ENCODE measurements at regions of chr15 and their contacts with region 1.

Region 1: GRCh38 chr15:64046347-64047153 is at the start of gene DAPK2:
- DNase-seq: peak; percentile 68 to 83
- ATAC-seq: peak; percentile 88 to 95 (median 90)
- H3K4me3 ChIP-seq: peak within 1 kb of the TSS; percentile 61 to 91 (median 72)
- H3K27ac ChIP-seq: peak within 1 kb of the TSS; percentile 48 to 86 (median 82)
- H3K4me1 ChIP-seq: peaks cover 2 to 69% (median 40%) of the 10 kb centered on the region in 9 donors
- H3K27me3 ChIP-seq: peaks cover 0 to 8% (median 0%) of the 10 kb centered on the region in 7 donors
- CTCF ChIP-seq: peak; percentile 73 to 94 (median 88)
- total RNA-seq, gene DAPK2: 20.8 to 62.6 (median 38.5) TPM

Region 2: GRCh38 chr15:63752075-63752684 is 294.4 kb before region 1 on chr15:
- intact Hi-C with region 1: loop called in 5 of 10 experiments (anchors 2 to 5 kb)
- DNase-seq: peak in 1 of 2 donors; percentile 60
- ATAC-seq: peak; percentile 52 to 86 (median 81)
- H3K4me3 ChIP-seq: no peak overlapping the region
- H3K27ac ChIP-seq: no peak overlapping the region
- H3K4me1 ChIP-seq: peaks cover 0 to 9% (median 0%) of the 10 kb centered on the region in 9 donors
- H3K27me3 ChIP-seq: no peaks in the 10 kb centered on the region
- CTCF ChIP-seq: peak; percentile 51 to 85 (median 73)

Region 3: GRCh38 chr15:63833021-63833696 is 213.4 kb before region 1 on chr15:
- intact Hi-C with region 1: loop called in 3 of 10 experiments (anchors 5 to 10 kb)
- DNase-seq: peak; percentile 25 to 41
- ATAC-seq: peak; percentile 33 to 82 (median 58)
- H3K4me3 ChIP-seq: peak overlapping the region; percentile 74 to 97 (median 94)
- H3K27ac ChIP-seq: peak overlapping the region; percentile 84 to 99 (median 97)
- H3K4me1 ChIP-seq: peaks cover 5 to 55% (median 30%) of the 10 kb centered on the region in 9 donors
- H3K27me3 ChIP-seq: no peaks in the 10 kb centered on the region
- CTCF ChIP-seq: no peak

Region 4: GRCh38 chr15:63896336-63897115 is 150.0 kb before region 1 on chr15:
- intact Hi-C with region 1: loop called in 4 of 10 experiments (anchors 5 to 10 kb)
- DNase-seq: no peak
- ATAC-seq: peak in 7 of 8 donors; percentile 41 to 67 (median 57)
- H3K4me3 ChIP-seq: no peak overlapping the region
- H3K27ac ChIP-seq: peak overlapping the region in 4 of 10 donors; percentile 3 to 70 (median 8)
- H3K4me1 ChIP-seq: peaks cover 4 to 85% (median 11%) of the 10 kb centered on the region in 9 donors
- H3K27me3 ChIP-seq: no peaks in the 10 kb centered on the region
- CTCF ChIP-seq: no peak

Region 5: GRCh38 chr15:63909819-63910437 is 136.6 kb before region 1 on chr15:
- intact Hi-C with region 1: loop called in 5 of 10 experiments (anchors 5 to 10 kb)
- DNase-seq: no peak
- ATAC-seq: peak; percentile 15 to 45 (median 25)
- H3K4me3 ChIP-seq: no peak overlapping the region
- H3K27ac ChIP-seq: peak overlapping the region in 8 of 10 donors; percentile 11 to 73 (median 59)
- H3K4me1 ChIP-seq: peaks cover 3 to 47% (median 27%) of the 10 kb centered on the region in 9 donors
- H3K27me3 ChIP-seq: no peaks in the 10 kb centered on the region
- CTCF ChIP-seq: no peak

Region 6: GRCh38 chr15:63945007-63945788 is 101.4 kb before region 1 on chr15:
- intact Hi-C with region 1: loop called (anchors 1 to 10 kb)
- DNase-seq: peak; percentile 77 to 82
- ATAC-seq: peak; percentile 66 to 84 (median 78)
- H3K4me3 ChIP-seq: no peak overlapping the region
- H3K27ac ChIP-seq: peak overlapping the region in 8 of 10 donors; percentile 1 to 63 (median 43)
- H3K4me1 ChIP-seq: peaks cover 10 to 39% (median 29%) of the 10 kb centered on the region in 9 donors
- H3K27me3 ChIP-seq: no peaks in the 10 kb centered on the region
- CTCF ChIP-seq: peak; percentile 74 to 94 (median 90)

Region 7: GRCh38 chr15:64089543-64090280 is 43.2 kb after region 1 on chr15:
- intact Hi-C with region 1: no loop called
- DNase-seq: no peak
- ATAC-seq: peak in 2 of 8 donors; percentile 16 to 26
- H3K4me3 ChIP-seq: no peak overlapping the region
- H3K27ac ChIP-seq: peak overlapping the region; percentile 24 to 96 (median 63)
- H3K4me1 ChIP-seq: peaks cover 0 to 58% (median 52%) of the 10 kb centered on the region in 9 donors
- H3K27me3 ChIP-seq: no peaks in the 10 kb centered on the region
- CTCF ChIP-seq: no peak

Region 8: DNA sequence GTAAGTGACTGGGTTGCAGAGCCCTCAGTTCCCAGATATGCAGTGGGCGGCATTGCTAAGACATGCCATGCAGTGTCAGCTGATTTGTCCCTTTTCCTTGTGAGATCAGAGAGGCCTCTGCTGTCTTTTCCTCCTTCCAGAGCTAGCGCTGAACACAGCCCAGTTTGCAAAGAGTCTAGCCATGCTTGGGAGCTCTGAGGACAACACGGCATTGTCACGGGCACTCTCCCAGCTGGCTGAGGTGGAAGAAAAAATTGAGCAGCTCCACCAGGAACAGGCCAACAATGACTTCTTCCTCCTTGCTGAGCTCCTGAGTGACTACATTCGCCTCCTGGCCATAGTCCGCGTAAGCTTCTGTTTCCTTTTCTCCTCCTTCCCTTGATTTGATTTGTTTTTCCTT is 85.0 kb after region 1 on chr15:
- intact Hi-C with region 1: no loop called
- DNase-seq: no peak
- ATAC-seq: peak in 5 of 8 donors; percentile 16 to 74 (median 48)
- H3K4me3 ChIP-seq: no peak overlapping the region
- H3K27ac ChIP-seq: peak overlapping the region in 4 of 10 donors; percentile 19 to 44 (median 34)
- H3K4me1 ChIP-seq: peaks cover 0 to 34% (median 23%) of the 10 kb centered on the region in 9 donors
- H3K27me3 ChIP-seq: no peaks in the 10 kb centered on the region
- CTCF ChIP-seq: no peak